Activated CD4-positive, alpha-beta T cell treated with anti-CD3 and anti-CD28 coated beads, Interleukin-2, amount 10 ng/mL, durations not matched to agents 7 days and 5 days (primary cell): ENCODE measurements at regions of chr1 and their contacts with region 1.

Region 1: DNA sequence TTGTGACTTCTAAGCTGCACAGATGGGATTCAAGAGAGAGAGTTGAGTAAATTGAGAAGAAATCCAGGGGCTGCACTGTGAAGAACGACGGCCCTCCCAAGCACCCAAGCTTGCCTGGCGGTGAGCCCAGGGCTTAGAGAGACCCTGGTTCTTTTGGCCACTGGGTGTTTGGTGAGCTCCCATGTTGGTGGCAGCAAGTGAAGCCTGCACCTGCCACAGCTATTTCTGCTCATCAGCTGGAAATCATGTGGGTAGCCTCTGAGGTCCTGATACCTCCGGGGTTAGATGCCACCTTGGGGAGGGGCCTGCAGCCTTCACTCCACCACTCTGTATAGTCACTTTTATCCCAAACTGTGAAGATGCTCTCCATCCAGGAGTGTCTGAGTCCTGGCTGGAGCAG is 6.2 kb upstream of the BTG2 start:
- DNase-seq: no peak
- H3K4me3 Mint-ChIP-seq: no peak overlapping the region
- H3K27ac Mint-ChIP-seq: no peak overlapping the region
- H3K4me1 Mint-ChIP-seq: peaks cover 42% of the 10 kb centered on the region
- H3K27me3 Mint-ChIP-seq: no peaks in the 10 kb centered on the region

Region 2: GRCh38 chr1:203117611-203118575 is 181.3 kb before region 1 on chr1:
- CTCF ChIA-PET with region 1: no interaction called
- POLR2A ChIA-PET with region 1: no interaction called
- DNase-seq: peak; percentile 37
- H3K4me3 Mint-ChIP-seq: no peak overlapping the region
- H3K27ac Mint-ChIP-seq: no peak overlapping the region
- H3K4me1 Mint-ChIP-seq: peaks cover 4% of the 10 kb centered on the region
- H3K27me3 Mint-ChIP-seq: peaks cover 50% of the 10 kb centered on the region

Region 3: GRCh38 chr1:203311368-203312301 is 12.5 kb after region 1 on chr1:
- CTCF ChIA-PET with region 1: interaction called, 31 read pairs
- POLR2A ChIA-PET with region 1: no interaction called
- DNase-seq: no peak
- H3K4me3 Mint-ChIP-seq: no peak overlapping the region
- H3K27ac Mint-ChIP-seq: no peak overlapping the region
- H3K4me1 Mint-ChIP-seq: peaks cover 50% of the 10 kb centered on the region
- H3K27me3 Mint-ChIP-seq: no peaks in the 10 kb centered on the region

Region 4: DNA sequence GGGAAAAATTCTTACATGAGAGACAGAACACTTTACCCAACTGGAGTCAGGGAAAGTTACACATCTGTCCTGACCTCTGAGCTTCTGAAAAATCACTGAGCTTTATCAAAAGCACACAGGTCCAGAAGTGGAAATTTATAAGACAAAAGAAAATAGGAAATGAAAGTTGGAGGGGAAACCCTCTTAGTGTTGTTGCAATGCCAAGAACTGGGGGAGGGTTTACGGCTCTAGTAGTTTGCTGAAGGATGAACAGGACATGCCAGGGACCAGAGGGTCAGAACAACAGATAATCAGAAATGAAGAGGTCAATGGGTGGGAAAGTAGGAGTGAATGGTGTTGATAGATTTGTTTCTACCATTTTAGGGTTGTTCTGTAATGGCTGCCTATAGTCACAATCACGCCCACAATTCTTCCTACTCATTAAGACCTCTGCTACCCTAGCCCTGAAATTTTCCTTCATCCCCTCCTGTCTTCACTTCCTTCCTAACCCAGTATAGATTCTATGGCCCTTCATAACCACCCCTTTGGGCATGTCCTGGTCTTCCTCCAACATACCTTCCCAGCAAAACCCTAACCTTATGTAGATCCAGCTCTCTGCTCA is 82.1 kb after region 1 on chr1:
- CTCF ChIA-PET with region 1: no interaction called
- POLR2A ChIA-PET with region 1: no interaction called
- DNase-seq: no peak
- H3K4me3 Mint-ChIP-seq: no peak overlapping the region
- H3K27ac Mint-ChIP-seq: no peak overlapping the region
- H3K4me1 Mint-ChIP-seq: no peaks in the 10 kb centered on the region
- H3K27me3 Mint-ChIP-seq: peaks cover 25% of the 10 kb centered on the region

Region 5: GRCh38 chr1:203440771-203441170 is 141.6 kb after region 1 on chr1:
- CTCF ChIA-PET with region 1: no interaction called
- POLR2A ChIA-PET with region 1: no interaction called
- DNase-seq: no peak
- H3K4me3 Mint-ChIP-seq: no peak overlapping the region
- H3K27ac Mint-ChIP-seq: no peak overlapping the region
- H3K4me1 Mint-ChIP-seq: no peaks in the 10 kb centered on the region
- H3K27me3 Mint-ChIP-seq: peaks cover 12% of the 10 kb centered on the region